ENCODE measurements at regions of chr7 and their contacts with region 1.

Region 1: GRCh38 chr7:106736508-106737201 is 75.7 kb upstream of the CCDC71L start:
- DNase-seq: peak in 1 of 2 donors; percentile 78
- ATAC-seq: peak; percentile 78 to 88 (median 82)
- H3K4me3 ChIP-seq: no peak overlapping the region
- H3K4me3 Mint-ChIP-seq: no peak overlapping the region
- H3K27ac ChIP-seq: no peak overlapping the region
- H3K27ac Mint-ChIP-seq: peak overlapping the region in 1 of 2 donors; percentile 23
- H3K4me1 ChIP-seq: peaks cover 11% of the 10 kb centered on the region
- H3K4me1 Mint-ChIP-seq: peaks cover 16 to 19% of the 10 kb centered on the region in 2 donors
- H3K27me3 ChIP-seq: no peaks in the 10 kb centered on the region
- H3K27me3 Mint-ChIP-seq: peaks cover 0 to 3% of the 10 kb centered on the region in 2 donors
- CTCF ChIP-seq: peak; percentile 64

Region 2: DNA sequence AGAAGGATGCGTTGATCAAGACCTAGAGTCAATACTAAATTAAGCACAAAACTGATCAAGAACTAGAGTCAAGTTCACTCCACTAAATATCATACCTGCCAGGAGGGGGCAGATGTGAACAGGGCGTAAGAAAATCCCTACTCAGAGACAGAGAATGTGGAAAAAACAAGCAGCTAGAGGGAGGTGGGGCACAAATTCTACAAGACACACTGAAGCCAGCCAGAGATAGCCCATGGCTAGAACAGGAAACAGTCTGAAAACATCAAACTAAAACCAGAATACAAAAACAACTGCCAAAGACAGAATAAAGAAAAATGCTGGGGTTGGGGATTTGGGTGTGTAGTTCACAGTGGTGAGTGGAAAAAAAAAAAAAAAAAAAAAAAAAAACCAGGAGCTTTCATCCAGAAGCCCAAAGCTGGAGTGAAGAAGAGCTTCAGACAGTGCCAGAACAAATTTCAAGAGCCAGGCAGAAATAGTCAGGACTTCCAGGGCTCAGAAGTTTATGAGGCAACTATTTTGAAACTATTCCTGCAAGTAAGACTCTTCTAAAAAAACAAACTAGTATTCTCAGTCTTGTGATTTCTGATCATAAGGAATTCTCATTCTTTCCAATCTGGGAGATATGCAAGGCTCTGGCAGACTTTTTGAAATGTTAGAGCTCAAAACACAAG is 194.0 kb before region 1 on chr7:
- intact Hi-C with region 1: loop called (anchors 2 kb)
- DNase-seq: peak in 1 of 2 donors; percentile 62
- ATAC-seq: peak in 2 of 3 donors; percentile 42 to 55
- H3K4me3 ChIP-seq: no peak overlapping the region
- H3K4me3 Mint-ChIP-seq: no peak overlapping the region
- H3K27ac ChIP-seq: no peak overlapping the region
- H3K27ac Mint-ChIP-seq: no peak overlapping the region
- H3K4me1 ChIP-seq: no peaks in the 10 kb centered on the region
- H3K4me1 Mint-ChIP-seq: peaks cover 0 to 5% of the 10 kb centered on the region in 2 donors
- H3K27me3 ChIP-seq: no peaks in the 10 kb centered on the region
- H3K27me3 Mint-ChIP-seq: peaks cover 0 to 7% of the 10 kb centered on the region in 2 donors
- CTCF ChIP-seq: no peak

Measured in natural killer cell (primary cell).